WTC11 (cell line): ENCODE measurements at regions of chr12 and their contacts with region 1.

Region 1: DNA sequence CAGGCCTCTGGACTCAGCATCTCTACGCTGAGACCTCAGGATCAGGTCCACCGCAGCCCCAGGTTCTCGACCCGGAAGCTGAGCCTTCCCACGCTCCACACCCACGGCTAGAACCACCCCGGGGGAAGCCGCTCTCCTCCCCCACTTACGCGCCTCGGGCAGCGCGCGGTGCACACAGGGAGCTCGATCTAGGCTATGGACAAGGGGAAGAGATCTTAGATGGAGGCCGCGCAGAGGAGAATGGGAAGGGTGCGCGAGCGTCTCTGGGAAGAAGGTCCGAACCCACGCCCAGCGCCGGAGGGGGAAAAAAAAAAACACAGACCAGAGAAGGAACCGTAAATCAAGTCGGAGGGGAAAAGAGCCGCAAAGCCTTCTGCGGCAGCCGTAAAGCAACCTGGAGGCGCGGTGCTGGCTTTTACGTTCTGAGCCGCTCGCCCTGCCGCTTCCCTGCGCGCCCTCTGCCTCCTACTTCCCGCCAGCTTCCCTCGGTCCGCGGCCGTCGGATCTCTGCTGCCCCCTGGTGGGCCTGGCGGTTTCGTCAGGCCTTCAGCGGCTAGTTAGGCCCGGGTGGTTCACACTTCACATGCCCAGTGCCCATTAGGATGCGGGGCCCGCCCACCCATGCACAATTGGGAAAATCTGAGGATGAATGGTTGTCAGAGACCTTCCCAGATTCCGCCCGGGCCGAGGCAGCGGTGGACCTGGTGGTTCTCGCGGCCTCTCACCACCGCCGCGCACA is at the start of gene RAD52:
- DNase-seq: peak; percentile 99
- ATAC-seq: peak; percentile 91
- H3K4me3 Mint-ChIP-seq: peak within 1 kb of the TSS; percentile 97
- H3K27ac Mint-ChIP-seq: peak within 1 kb of the TSS; percentile 99
- H3K4me1 Mint-ChIP-seq: peaks cover 17% of the 10 kb centered on the region
- H3K27me3 Mint-ChIP-seq: no peaks in the 10 kb centered on the region
- CTCF ChIP-seq: peak; percentile 86
- total RNA-seq, gene RAD52: 17.1 to 20.7 TPM (median 19.2 TPM) in 3 replicates

Region 2: GRCh38 chr12:569803-570434 is 379.7 kb before region 1 on chr12:
- CTCF ChIA-PET with region 1: interaction called, 17 read pairs
- POLR2A ChIA-PET with region 1: no interaction called
- DNase-seq: peak; percentile 88
- ATAC-seq: peak; percentile 73
- H3K4me3 Mint-ChIP-seq: peak overlapping the region; percentile 79
- H3K27ac Mint-ChIP-seq: no peak overlapping the region
- H3K4me1 Mint-ChIP-seq: peaks cover 10% of the 10 kb centered on the region
- H3K27me3 Mint-ChIP-seq: peaks cover 15% of the 10 kb centered on the region
- CTCF ChIP-seq: peak; percentile 72

Region 3: DNA sequence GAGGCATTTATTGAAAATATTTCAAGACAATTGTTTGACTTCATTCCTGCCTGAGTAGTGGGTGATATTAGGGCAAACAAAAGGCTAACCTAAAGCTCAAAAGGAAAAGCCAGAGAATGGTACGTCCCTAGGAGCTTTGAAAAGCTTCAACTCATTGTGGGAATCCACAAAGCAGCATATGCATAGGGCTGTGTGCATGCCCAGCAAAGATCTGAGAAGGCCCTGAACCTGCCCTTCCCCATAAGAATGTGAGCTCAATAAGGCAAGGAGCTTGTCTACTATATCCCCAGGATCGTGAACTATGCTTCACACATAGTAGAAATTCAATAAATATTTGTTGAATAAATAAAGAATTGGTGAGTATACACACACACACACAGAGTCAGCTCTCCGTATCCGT is 18.9 kb after region 1 on chr12:
- CTCF ChIA-PET with region 1: interaction called, 10 read pairs
- POLR2A ChIA-PET with region 1: no interaction called
- DNase-seq: no peak
- ATAC-seq: peak; percentile 55
- H3K4me3 Mint-ChIP-seq: no peak overlapping the region
- H3K27ac Mint-ChIP-seq: no peak overlapping the region
- H3K4me1 Mint-ChIP-seq: peaks cover 12% of the 10 kb centered on the region
- H3K27me3 Mint-ChIP-seq: no peaks in the 10 kb centered on the region; the same call in 1 of the 2 replicates
- CTCF ChIP-seq: no peak

Region 4: GRCh38 chr12:990661-991349 is 41.2 kb after region 1 on chr12 and contains the start of gene ERC1:
- CTCF ChIA-PET with region 1: interaction called, 17 read pairs
- POLR2A ChIA-PET with region 1: interaction called, 10 read pairs
- DNase-seq: peak; percentile 79
- ATAC-seq: peak; percentile 73
- H3K4me3 Mint-ChIP-seq: peak within 1 kb of the TSS; percentile 88
- H3K27ac Mint-ChIP-seq: peak within 1 kb of the TSS; percentile 83
- H3K4me1 Mint-ChIP-seq: peaks cover 26% of the 10 kb centered on the region
- H3K27me3 Mint-ChIP-seq: no peaks in the 10 kb centered on the region
- CTCF ChIP-seq: no peak
- total RNA-seq, gene ERC1: 42.2 to 51.8 TPM (median 47.5 TPM) in 3 replicates